PC-9 (cell line): ENCODE measurements at regions of chr12 and their contacts with region 1.

Region 1: DNA sequence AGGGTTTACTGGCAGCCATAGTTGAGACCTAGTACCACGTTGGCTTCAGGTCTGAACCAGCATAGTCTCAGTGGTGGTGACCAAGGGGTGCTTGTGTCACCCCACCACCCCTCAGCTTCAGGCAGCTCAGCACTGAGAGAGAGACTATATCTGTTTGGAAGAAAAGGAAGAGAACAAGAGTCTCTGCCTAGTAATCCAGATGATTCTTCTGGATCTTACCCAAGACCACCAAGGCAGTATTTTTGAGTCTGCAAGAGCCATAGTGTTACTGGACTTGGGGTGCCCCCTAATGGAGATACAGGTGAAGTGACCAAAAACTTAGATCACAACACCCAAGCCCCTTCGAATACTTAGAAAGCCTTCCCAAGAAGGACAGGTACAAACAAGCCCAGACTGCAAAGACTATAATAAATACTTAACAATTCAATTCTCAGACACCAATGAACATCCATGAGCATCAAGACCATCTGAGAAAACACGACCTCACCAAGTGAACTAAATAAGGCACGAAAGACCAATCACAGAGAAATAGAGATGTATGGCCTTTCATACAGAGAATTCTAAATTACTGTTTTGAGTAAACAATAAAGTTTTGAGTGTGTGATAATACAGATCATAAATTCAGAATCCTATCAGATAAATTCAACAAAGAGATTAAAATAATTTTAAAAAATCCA is 107.0 kb downstream of the HELB start:
- DNase-seq: peak in 1 of 2 experiments; percentile 3
- H3K4me3 ChIP-seq: no peak overlapping the region
- H3K27ac ChIP-seq: no peak overlapping the region
- H3K4me1 ChIP-seq: no peaks in the 10 kb centered on the region
- H3K27me3 ChIP-seq: no peaks in the 10 kb centered on the region
- CTCF ChIP-seq: peak; percentile 74

Region 2: DNA sequence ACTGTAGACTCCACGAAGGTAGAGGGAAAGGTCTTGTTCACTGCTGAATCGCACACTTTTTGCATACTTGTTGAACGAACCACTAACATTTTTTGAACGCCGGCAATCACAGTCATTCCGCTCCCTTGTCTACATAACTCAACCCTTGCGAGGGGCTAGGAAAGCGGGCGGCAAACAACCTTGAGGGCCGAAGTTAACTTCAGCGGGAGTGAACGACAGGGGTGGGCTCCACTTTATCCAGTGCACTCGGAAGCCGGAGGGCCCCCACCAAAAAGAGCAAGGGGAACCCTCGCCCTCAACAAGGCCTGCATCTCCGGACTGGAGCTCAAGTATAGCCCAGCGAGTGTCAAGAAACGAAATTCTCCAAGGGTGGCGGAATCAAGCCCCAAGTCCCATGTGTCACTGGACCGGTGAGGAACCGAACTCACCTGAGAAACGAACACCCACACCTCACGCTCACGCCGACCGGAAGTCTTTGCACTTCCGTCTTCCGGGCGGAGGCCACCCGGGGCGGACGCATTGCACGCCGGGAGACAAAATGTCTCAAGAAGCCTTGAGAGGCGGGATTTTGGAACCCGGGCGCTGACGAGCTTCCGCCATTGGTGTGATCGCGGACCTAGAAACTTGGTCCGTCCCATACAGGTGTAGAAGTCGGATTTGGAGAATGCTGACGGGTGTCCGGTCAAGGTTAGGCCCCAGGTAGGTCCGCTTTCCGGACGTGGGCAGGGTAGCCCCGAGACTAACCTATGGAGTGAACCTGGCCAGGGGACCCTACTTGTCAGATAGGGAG is 278.9 kb before region 1 on chr12 and contains the start of gene LLPH:
- CTCF ChIA-PET with region 1: no interaction called
- POLR2A ChIA-PET with region 1: no interaction called
- intact Hi-C with region 1: loop called (anchors 10 kb)
- DNase-seq: peak; percentile 84 to 91
- H3K4me3 ChIP-seq: peak within 1 kb of the TSS; percentile 91
- H3K27ac ChIP-seq: peak within 1 kb of the TSS; percentile 63
- H3K4me1 ChIP-seq: peaks cover 16% of the 10 kb centered on the region
- H3K27me3 ChIP-seq: no peaks in the 10 kb centered on the region
- CTCF ChIP-seq: no peak
- total RNA-seq, gene LLPH: 20.4 and 25.0 TPM in 2 replicates

Region 3: GRCh38 chr12:66144791-66145754 is 264.3 kb before region 1 on chr12:
- CTCF ChIA-PET with region 1: interaction called, 18 read pairs
- POLR2A ChIA-PET with region 1: no interaction called
- intact Hi-C with region 1: no loop called
- DNase-seq: peak; percentile 27 to 49
- H3K4me3 ChIP-seq: no peak overlapping the region
- H3K27ac ChIP-seq: no peak overlapping the region; the same call in 1 of the 2 replicates
- H3K4me1 ChIP-seq: peaks cover 5% of the 10 kb centered on the region; the same call in 1 of the 2 replicates
- H3K27me3 ChIP-seq: no peaks in the 10 kb centered on the region
- CTCF ChIP-seq: peak; percentile 75